GM12878 (cell line): ENCODE measurements at regions of chr10 and their contacts with region 1.

Region 1: GRCh38 chr10:19154355-19154754 is 105.8 kb downstream of the MALRD1 start:
- DNase-seq: no peak
- ATAC-seq: peak; percentile 21; the same call in 1 of the 3 replicates
- H3K4me3 ChIP-seq: no peak overlapping the region
- H3K27ac ChIP-seq: no peak overlapping the region
- H3K4me1 ChIP-seq: no peaks in the 10 kb centered on the region
- H3K27me3 ChIP-seq: no peaks in the 10 kb centered on the region
- CTCF ChIP-seq: no peak
- EP300 ChIP-seq: no peak
- POLR2A ChIP-seq: no peak
- RAD21 ChIP-seq: no peak

Region 2: DNA sequence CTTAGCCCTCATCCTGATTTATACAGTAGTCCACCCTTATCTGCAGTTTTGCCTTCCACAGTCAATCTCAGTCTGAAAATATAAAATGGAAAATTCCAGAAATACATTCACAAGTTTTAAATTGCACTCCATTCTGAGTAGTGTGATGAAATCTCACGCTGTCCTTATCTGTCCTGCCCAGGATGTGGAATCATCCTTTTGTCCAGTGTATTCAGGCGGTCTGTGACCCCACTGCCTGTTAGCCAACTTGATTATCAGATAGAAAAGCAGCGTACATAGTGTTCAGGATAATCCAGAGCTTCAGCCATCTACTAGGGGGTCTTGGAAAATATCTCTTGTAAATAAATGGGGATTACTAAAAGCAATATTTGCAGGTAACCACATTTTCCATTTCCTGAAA is 40.5 kb after region 1 on chr10:
- CTCF ChIA-PET with region 1: interaction called, 3 read pairs
- POLR2A ChIA-PET with region 1: interaction called, 3 read pairs
- RAD21 ChIA-PET with region 1: interaction called, 3 read pairs
- SMC1A ChIA-PET with region 1: interaction called, 12 read pairs
- in situ Hi-C with region 1: no loop called
- intact Hi-C with region 1: no loop called
- DNase-seq: no peak
- ATAC-seq: no peak
- H3K4me3 ChIP-seq: no peak overlapping the region
- H3K27ac ChIP-seq: no peak overlapping the region
- H3K4me1 ChIP-seq: no peaks in the 10 kb centered on the region
- H3K27me3 ChIP-seq: no peaks in the 10 kb centered on the region
- CTCF ChIP-seq: no peak
- EP300 ChIP-seq: no peak
- POLR2A ChIP-seq: no peak
- RAD21 ChIP-seq: no peak

Region 3: GRCh38 chr10:19290770-19291169 is 136.4 kb after region 1 on chr10:
- CTCF ChIA-PET with region 1: no interaction called
- POLR2A ChIA-PET with region 1: no interaction called
- RAD21 ChIA-PET with region 1: no interaction called
- SMC1A ChIA-PET with region 1: no interaction called
- in situ Hi-C with region 1: no loop called
- intact Hi-C with region 1: no loop called
- DNase-seq: no peak
- ATAC-seq: no peak
- H3K4me3 ChIP-seq: no peak overlapping the region
- H3K27ac ChIP-seq: no peak overlapping the region
- H3K4me1 ChIP-seq: no peaks in the 10 kb centered on the region
- H3K27me3 ChIP-seq: no peaks in the 10 kb centered on the region
- CTCF ChIP-seq: no peak
- EP300 ChIP-seq: no peak
- POLR2A ChIP-seq: no peak
- RAD21 ChIP-seq: no peak